ENCODE measurements at regions of chr3 and their contacts with region 1.

Region 1: DNA sequence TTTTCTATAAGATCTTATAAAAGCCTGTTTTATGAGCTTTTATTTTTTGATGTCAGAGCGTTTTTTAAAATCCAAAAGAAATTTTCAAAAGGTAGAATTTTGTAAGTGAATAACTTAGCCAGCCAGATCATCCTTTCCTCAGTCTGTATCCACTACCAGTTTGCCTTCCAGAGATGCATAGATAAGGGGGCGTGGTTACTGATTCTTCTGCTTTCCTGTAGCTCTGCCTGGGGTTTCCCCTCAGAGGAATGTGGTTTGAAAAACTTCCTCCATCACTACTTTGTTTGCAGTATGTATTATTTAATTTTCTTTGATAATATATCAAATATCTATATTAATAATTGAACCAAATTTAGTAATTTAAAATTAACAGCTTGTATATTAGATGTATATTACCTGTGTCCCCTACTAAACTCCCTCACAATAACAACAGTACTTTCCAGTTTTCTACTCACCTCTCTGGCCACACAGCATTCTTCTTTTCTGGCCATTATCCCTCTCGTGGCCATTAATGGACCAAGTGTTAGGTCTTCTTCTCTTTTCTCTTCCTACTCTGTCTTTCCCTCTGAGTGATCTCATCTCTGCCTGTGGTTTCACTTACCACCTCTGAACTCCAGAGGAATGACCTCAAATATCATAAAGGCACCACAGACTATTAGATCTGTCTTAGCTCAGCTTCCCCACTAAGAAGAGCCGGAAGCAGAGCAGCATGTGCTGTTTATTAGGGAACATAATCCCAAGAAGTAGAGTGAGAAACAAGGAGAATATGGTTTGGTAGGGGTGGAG is 239.7 kb downstream of the UBE2E2 start:
- DNase-seq: peak; percentile 28
- H3K4me3 Mint-ChIP-seq: no peak overlapping the region
- H3K27ac Mint-ChIP-seq: no peak overlapping the region
- H3K4me1 Mint-ChIP-seq: peaks cover 43% of the 10 kb centered on the region
- H3K27me3 Mint-ChIP-seq: no peaks in the 10 kb centered on the region

Region 2: GRCh38 chr3:23202921-23203707 is 239.7 kb before region 1 on chr3 and contains the start of gene UBE2E2:
- CTCF ChIA-PET with region 1: no interaction called
- intact Hi-C with region 1: loop called (anchors 1 kb)
- DNase-seq: peak; percentile 58
- H3K4me3 Mint-ChIP-seq: peak within 1 kb of the TSS; percentile 83
- H3K27ac Mint-ChIP-seq: peak within 1 kb of the TSS; percentile 50
- H3K4me1 Mint-ChIP-seq: peaks cover 18% of the 10 kb centered on the region
- H3K27me3 Mint-ChIP-seq: peaks cover 6% of the 10 kb centered on the region
- total RNA-seq, gene UBE2E2: 11.6 to 14.0 TPM

Region 3: GRCh38 chr3:23324745-23325144 is 118.0 kb before region 1 on chr3:
- CTCF ChIA-PET with region 1: no interaction called
- intact Hi-C with region 1: loop called (anchors 1 kb)
- DNase-seq: no peak
- H3K4me3 Mint-ChIP-seq: no peak overlapping the region
- H3K27ac Mint-ChIP-seq: no peak overlapping the region
- H3K4me1 Mint-ChIP-seq: peaks cover 34% of the 10 kb centered on the region
- H3K27me3 Mint-ChIP-seq: no peaks in the 10 kb centered on the region

Region 4: GRCh38 chr3:23726811-23727548 is 284.2 kb after region 1 on chr3:
- CTCF ChIA-PET with region 1: no interaction called
- intact Hi-C with region 1: loop called (anchors 1 kb)
- DNase-seq: peak; percentile 20
- H3K4me3 Mint-ChIP-seq: no peak overlapping the region
- H3K27ac Mint-ChIP-seq: no peak overlapping the region
- H3K4me1 Mint-ChIP-seq: peaks cover 9% of the 10 kb centered on the region
- H3K27me3 Mint-ChIP-seq: no peaks in the 10 kb centered on the region